Transverse colon (tissue), 4 donors: ENCODE measurements at regions of chr7 and their contacts with region 1.

Region 1: DNA sequence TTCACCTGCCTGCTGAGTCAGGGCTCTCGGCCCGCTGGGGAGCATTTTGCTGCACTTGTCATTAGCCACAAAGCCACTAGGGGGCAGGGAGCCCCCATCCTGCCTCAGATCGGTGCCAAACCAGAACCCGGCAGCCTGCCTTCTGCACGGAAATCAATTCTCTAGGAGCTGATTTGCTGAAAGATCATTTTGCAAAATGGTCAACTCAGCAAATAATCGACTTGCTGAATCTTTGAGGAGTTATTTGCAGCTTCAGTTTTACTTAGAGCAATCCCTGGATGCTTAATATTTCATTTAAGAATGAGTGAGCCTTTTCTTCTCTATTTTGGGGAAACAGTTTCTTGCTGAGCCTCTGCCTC is 1.7 kb upstream of the GIMAP8 start:
- DNase-seq: peak; percentile 85
- H3K4me3 ChIP-seq: no peak overlapping the region
- H3K27ac ChIP-seq: peak overlapping the region; percentile 70 to 83 (median 74)
- H3K4me1 ChIP-seq: peaks cover 0 to 24% (median 13%) of the 10 kb centered on the region in 4 donors
- H3K27me3 ChIP-seq: no peaks in the 10 kb centered on the region
- CTCF ChIP-seq: peak; percentile 88 to 92 (median 90)
- EP300 ChIP-seq: no peak
- POLR2A ChIP-seq: no peak

Region 2: GRCh38 chr7:149707448-149707886 is 741.3 kb before region 1 on chr7:
- in situ Hi-C with region 1: no loop called
- intact Hi-C with region 1: no loop called
- DNase-seq: no peak
- H3K4me3 ChIP-seq: no peak overlapping the region
- H3K27ac ChIP-seq: no peak overlapping the region
- H3K4me1 ChIP-seq: no peaks in the 10 kb centered on the region
- H3K27me3 ChIP-seq: no peaks in the 10 kb centered on the region
- CTCF ChIP-seq: no peak
- EP300 ChIP-seq: no peak
- POLR2A ChIP-seq: no peak

Region 3: GRCh38 chr7:150737265-150738055 is 288.7 kb after region 1 on chr7 and contains the start of gene GIMAP5:
- in situ Hi-C with region 1: loop called in 2 of 4 experiments (anchors 10 to 25 kb)
- intact Hi-C with region 1: no loop called
- DNase-seq: no peak
- H3K4me3 ChIP-seq: peak within 1 kb of the TSS in 3 of 4 donors; percentile 25 to 42 (median 30)
- H3K27ac ChIP-seq: peak within 1 kb of the TSS; percentile 37 to 76 (median 68)
- H3K4me1 ChIP-seq: peaks cover 0 to 13% (median 0%) of the 10 kb centered on the region in 4 donors
- H3K27me3 ChIP-seq: no peaks in the 10 kb centered on the region
- CTCF ChIP-seq: no peak
- EP300 ChIP-seq: no peak
- POLR2A ChIP-seq: peak; percentile 45
- total RNA-seq, gene GIMAP5: 2.6 to 15.7 (median 11.2) TPM

Region 4: GRCh38 chr7:150753826-150754603 is 305.2 kb after region 1 on chr7:
- in situ Hi-C with region 1: loop called (anchors 5 to 25 kb)
- intact Hi-C with region 1: no loop called
- DNase-seq: no peak
- H3K4me3 ChIP-seq: no peak overlapping the region
- H3K27ac ChIP-seq: no peak overlapping the region
- H3K4me1 ChIP-seq: peaks cover 0 to 4% (median 0%) of the 10 kb centered on the region in 4 donors
- H3K27me3 ChIP-seq: no peaks in the 10 kb centered on the region
- CTCF ChIP-seq: no peak
- EP300 ChIP-seq: no peak
- POLR2A ChIP-seq: no peak

Region 5: GRCh38 chr7:150898475-150899011 is 449.8 kb after region 1 on chr7:
- in situ Hi-C with region 1: loop called in 1 of 4 experiments (anchors 25 kb)
- intact Hi-C with region 1: no loop called
- DNase-seq: peak; percentile 85
- H3K4me3 ChIP-seq: no peak overlapping the region
- H3K27ac ChIP-seq: peak overlapping the region in 2 of 4 donors; percentile 5 to 62
- H3K4me1 ChIP-seq: peaks cover 19 to 43% (median 34%) of the 10 kb centered on the region in 4 donors
- H3K27me3 ChIP-seq: peaks cover 5% of the 10 kb centered on the region
- CTCF ChIP-seq: peak; percentile 92 to 97 (median 95)
- EP300 ChIP-seq: no peak
- POLR2A ChIP-seq: no peak

Region 6: GRCh38 chr7:150974468-150975391 is 526.0 kb after region 1 on chr7:
- in situ Hi-C with region 1: loop called in 1 of 4 experiments (anchors 25 kb)
- intact Hi-C with region 1: no loop called
- DNase-seq: peak; percentile 83
- H3K4me3 ChIP-seq: peak overlapping the region; percentile 24 to 54 (median 44)
- H3K27ac ChIP-seq: peak overlapping the region; percentile 74 to 94 (median 84)
- H3K4me1 ChIP-seq: peaks cover 47 to 90% (median 70%) of the 10 kb centered on the region in 4 donors
- H3K27me3 ChIP-seq: peaks cover 31% of the 10 kb centered on the region
- CTCF ChIP-seq: peak in 4 of 5 experiments; percentile 25 to 39 (median 28)
- EP300 ChIP-seq: no peak
- POLR2A ChIP-seq: peak; percentile 35